ENCODE measurements at regions of chr20 and their contacts with region 1.

Region 1: GRCh38 chr20:44187051-44187762 is at the start of gene JPH2:
- DNase-seq: no peak
- H3K4me3 ChIP-seq: peak within 1 kb of the TSS; percentile 51
- H3K27ac ChIP-seq: peak within 1 kb of the TSS; percentile 85
- H3K27me3 ChIP-seq: no peaks in the 10 kb centered on the region
- CTCF ChIP-seq: no peak
- polyA plus RNA-seq, gene JPH2: 1.3 and 1.6 TPM in 2 replicates

Region 2: GRCh38 chr20:44106615-44107014 is 80.6 kb before region 1 on chr20:
- CTCF ChIA-PET with region 1: interaction called, 402 read pairs
- POLR2A ChIA-PET with region 1: no interaction called
- DNase-seq: no peak
- H3K4me3 ChIP-seq: no peak overlapping the region
- H3K27ac ChIP-seq: no peak overlapping the region
- H3K27me3 ChIP-seq: peaks cover 17% of the 10 kb centered on the region
- CTCF ChIP-seq: no peak

Region 3: GRCh38 chr20:44129911-44130718 is 57.1 kb before region 1 on chr20:
- CTCF ChIA-PET with region 1: interaction called, 15 read pairs
- POLR2A ChIA-PET with region 1: no interaction called
- DNase-seq: no peak
- H3K4me3 ChIP-seq: no peak overlapping the region
- H3K27ac ChIP-seq: no peak overlapping the region
- H3K27me3 ChIP-seq: no peaks in the 10 kb centered on the region
- CTCF ChIP-seq: no peak

Region 4: GRCh38 chr20:44153636-44154043 is 33.6 kb before region 1 on chr20:
- CTCF ChIA-PET with region 1: interaction called, 19 read pairs
- POLR2A ChIA-PET with region 1: no interaction called
- DNase-seq: no peak
- H3K4me3 ChIP-seq: no peak overlapping the region
- H3K27ac ChIP-seq: no peak overlapping the region
- H3K27me3 ChIP-seq: no peaks in the 10 kb centered on the region
- CTCF ChIP-seq: no peak

Region 5: GRCh38 chr20:44203161-44203560 is 16.0 kb after region 1 on chr20:
- CTCF ChIA-PET with region 1: interaction called, 12 read pairs
- POLR2A ChIA-PET with region 1: no interaction called
- DNase-seq: no peak
- H3K4me3 ChIP-seq: no peak overlapping the region
- H3K27ac ChIP-seq: peak overlapping the region; percentile 34
- H3K27me3 ChIP-seq: no peaks in the 10 kb centered on the region
- CTCF ChIP-seq: no peak

Region 6: GRCh38 chr20:44264287-44264686 is 77.1 kb after region 1 on chr20:
- CTCF ChIA-PET with region 1: no interaction called
- POLR2A ChIA-PET with region 1: no interaction called
- DNase-seq: no peak
- H3K4me3 ChIP-seq: no peak overlapping the region
- H3K27ac ChIP-seq: no peak overlapping the region
- H3K27me3 ChIP-seq: peaks cover 3% of the 10 kb centered on the region
- CTCF ChIP-seq: no peak

Measured in AG04450 (cell line).